SK-N-SH (cell line): ENCODE measurements at regions of chr2 and their contacts with region 1.

Region 1: GRCh38 chr2:153519257-153519875 is 40.8 kb upstream of the RPRM start:
- DNase-seq: peak; percentile 30
- H3K4me3 ChIP-seq: no peak overlapping the region
- H3K27ac ChIP-seq: no peak overlapping the region
- H3K4me1 ChIP-seq: no peaks in the 10 kb centered on the region
- H3K27me3 ChIP-seq: no peaks in the 10 kb centered on the region
- CTCF ChIP-seq: peak; percentile 93
- EP300 ChIP-seq: no peak
- RAD21 ChIP-seq: peak; percentile 76

Region 2: DNA sequence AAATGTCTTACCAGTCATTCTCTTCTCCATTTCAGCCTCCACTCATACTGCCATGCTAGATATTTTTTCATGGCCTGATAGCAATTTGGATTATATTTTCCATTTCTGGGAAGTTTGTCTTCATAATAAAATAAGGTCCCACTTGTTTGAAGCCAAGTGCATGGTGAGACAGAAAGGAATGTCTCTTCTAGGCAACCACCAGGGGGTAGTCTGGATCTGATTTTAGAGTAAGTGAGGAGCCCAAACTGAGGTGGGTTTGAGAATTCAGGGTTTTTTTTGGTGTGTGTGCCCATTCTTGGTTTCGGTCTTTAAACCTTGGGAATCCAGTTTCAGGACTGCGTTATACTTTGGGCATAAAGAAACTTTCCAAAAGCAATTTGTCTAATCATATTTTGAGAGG is 356.3 kb before region 1 on chr2:
- CTCF ChIA-PET with region 1: interaction called, 10 read pairs
- POLR2A ChIA-PET with region 1: no interaction called
- DNase-seq: peak; percentile 39
- H3K4me3 ChIP-seq: peak overlapping the region in 1 of 2 experiments; percentile 25; a peak in 1 of 4 replicates
- H3K27ac ChIP-seq: no peak overlapping the region
- H3K4me1 ChIP-seq: no peaks in the 10 kb centered on the region
- H3K27me3 ChIP-seq: no peaks in the 10 kb centered on the region
- CTCF ChIP-seq: peak; percentile 70
- EP300 ChIP-seq: no peak
- RAD21 ChIP-seq: peak; percentile 76

Region 3: GRCh38 chr2:153432360-153432759 is 87.0 kb before region 1 on chr2:
- CTCF ChIA-PET with region 1: no interaction called
- POLR2A ChIA-PET with region 1: no interaction called
- DNase-seq: no peak
- H3K4me3 ChIP-seq: no peak overlapping the region
- H3K27ac ChIP-seq: no peak overlapping the region
- H3K4me1 ChIP-seq: no peaks in the 10 kb centered on the region
- H3K27me3 ChIP-seq: no peaks in the 10 kb centered on the region
- CTCF ChIP-seq: no peak
- EP300 ChIP-seq: no peak
- RAD21 ChIP-seq: no peak

Region 4: DNA sequence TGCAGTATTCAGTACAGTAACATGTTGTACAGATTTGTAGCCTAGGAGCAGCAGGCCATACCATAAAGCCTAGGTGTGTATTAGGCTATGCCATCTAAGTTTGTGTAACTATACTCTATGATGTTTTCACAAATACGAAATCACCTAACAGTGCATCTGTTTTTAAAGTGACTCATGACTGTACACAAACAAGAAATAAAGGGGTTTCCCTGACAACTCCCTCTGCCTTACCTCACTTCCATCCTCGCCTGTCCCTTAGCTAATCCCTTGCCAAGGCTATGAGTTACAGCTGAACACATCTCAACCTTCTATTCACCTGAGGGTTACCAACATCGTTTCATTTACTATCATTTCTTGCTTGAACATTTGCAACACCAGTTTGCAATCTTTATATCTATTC is 37.8 kb after region 1 on chr2:
- CTCF ChIA-PET with region 1: no interaction called
- POLR2A ChIA-PET with region 1: no interaction called
- DNase-seq: no peak
- H3K4me3 ChIP-seq: no peak overlapping the region
- H3K27ac ChIP-seq: no peak overlapping the region
- H3K4me1 ChIP-seq: no peaks in the 10 kb centered on the region
- H3K27me3 ChIP-seq: no peaks in the 10 kb centered on the region
- CTCF ChIP-seq: no peak
- EP300 ChIP-seq: no peak
- RAD21 ChIP-seq: no peak

Region 5: GRCh38 chr2:153589586-153589985 is 70.2 kb after region 1 on chr2:
- CTCF ChIA-PET with region 1: no interaction called
- POLR2A ChIA-PET with region 1: no interaction called
- DNase-seq: no peak
- H3K4me3 ChIP-seq: no peak overlapping the region
- H3K27ac ChIP-seq: no peak overlapping the region
- H3K4me1 ChIP-seq: no peaks in the 10 kb centered on the region
- H3K27me3 ChIP-seq: no peaks in the 10 kb centered on the region
- CTCF ChIP-seq: no peak
- EP300 ChIP-seq: no peak
- RAD21 ChIP-seq: no peak